ENCODE measurements at regions of chr12 and their contacts with region 1.

Region 1: DNA sequence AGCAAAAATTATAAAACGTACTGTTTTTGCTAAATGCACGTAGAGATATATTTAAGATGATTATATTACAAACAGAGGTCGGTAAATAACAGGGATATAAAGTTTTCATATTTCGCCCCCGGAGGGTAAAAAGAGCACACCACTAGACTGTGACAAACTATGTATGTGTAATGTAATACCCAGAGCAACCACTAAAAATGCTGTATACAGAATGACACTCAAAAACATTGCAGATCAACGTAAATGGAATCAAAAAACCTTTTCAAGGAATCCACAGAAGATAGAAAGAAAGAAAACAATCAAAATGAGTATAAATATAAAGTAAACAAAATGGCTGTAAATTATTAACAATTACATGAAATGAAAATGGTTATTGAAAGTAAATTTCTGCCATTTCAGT is 37.6 kb upstream of the PRB4 start:
- DNase-seq: peak in 2 of 4 experiments; percentile 4 to 14
- ATAC-seq: peak; percentile 74
- H3K4me3 ChIP-seq: no peak overlapping the region
- H3K27ac ChIP-seq: no peak overlapping the region
- H3K4me1 ChIP-seq: no peaks in the 10 kb centered on the region
- H3K27me3 ChIP-seq: no peaks in the 10 kb centered on the region
- CTCF ChIP-seq: peak in 1 of 3 experiments; percentile 1; a peak in 1 of 6 replicates
- EP300 ChIP-seq: no peak
- POLR2A ChIP-seq: no peak
- RAD21 ChIP-seq: no peak

Region 2: GRCh38 chr12:11397366-11397765 is 49.6 kb after region 1 on chr12:
- CTCF ChIA-PET with region 1: interaction called, 3 read pairs
- POLR2A ChIA-PET with region 1: no interaction called
- in situ Hi-C with region 1: loop called (anchors 5 kb)
- intact Hi-C with region 1: no loop called
- DNase-seq: no peak
- ATAC-seq: no peak
- H3K4me3 ChIP-seq: no peak overlapping the region
- H3K27ac ChIP-seq: no peak overlapping the region
- H3K4me1 ChIP-seq: no peaks in the 10 kb centered on the region
- H3K27me3 ChIP-seq: no peaks in the 10 kb centered on the region
- CTCF ChIP-seq: no peak
- EP300 ChIP-seq: no peak
- POLR2A ChIP-seq: no peak
- RAD21 ChIP-seq: no peak